GM10248 (cell line): ENCODE measurements at regions of chr12 and their contacts with region 1.

Region 1: GRCh38 chr12:124927201-124928094 is 13.0 kb upstream of the UBC start:
- DNase-seq: peak; percentile 85
- CTCF ChIP-seq: no peak

Region 2: DNA sequence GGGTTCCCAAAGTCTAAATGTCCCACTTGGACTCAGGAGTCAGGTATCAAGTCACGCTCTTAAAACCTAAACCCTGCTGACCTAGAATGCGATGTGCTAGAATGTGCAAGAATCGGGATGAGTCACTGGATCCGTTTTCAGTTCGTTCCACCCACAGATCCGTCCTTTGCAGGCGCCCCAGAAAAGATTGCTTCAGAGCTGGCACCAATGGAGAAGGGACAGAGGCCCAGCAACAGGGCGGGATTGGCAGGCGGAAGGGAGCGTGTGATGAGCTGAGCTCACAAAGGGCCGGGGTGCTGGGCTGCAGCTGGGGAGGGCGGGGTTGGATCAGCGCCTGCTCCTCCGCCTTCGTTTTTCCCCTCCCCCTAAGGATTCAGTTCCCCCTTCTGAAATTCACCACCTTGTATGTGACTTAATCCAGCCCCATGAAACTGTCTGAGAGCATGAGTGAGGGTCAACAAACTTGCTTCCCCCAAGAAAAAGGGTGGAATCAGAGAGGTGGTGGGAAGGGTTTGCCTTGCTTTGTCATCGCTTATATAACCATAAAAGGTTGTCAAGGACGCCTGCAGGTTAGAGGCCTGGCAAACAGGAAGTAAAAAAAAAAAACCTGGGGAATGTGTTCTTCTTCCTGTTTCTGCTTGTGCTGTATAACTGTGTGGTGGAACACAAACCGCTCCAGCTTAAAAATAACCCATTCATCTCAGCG is 10.2 kb before region 1 on chr12:
- CTCF ChIA-PET with region 1: interaction called, 5 read pairs
- POLR2A ChIA-PET with region 1: interaction called, 14 read pairs
- DNase-seq: peak; percentile 78
- CTCF ChIP-seq: no peak